Activated naive CD4-positive, alpha-beta T cell treated with anti-CD3 and anti-CD28 coated beads, Interleukin-2, amount 10 ng/mL, durations not matched to agents 7 days and 5 days (primary cell): ENCODE measurements at regions of chr6 and their contacts with region 1.

Region 1: DNA sequence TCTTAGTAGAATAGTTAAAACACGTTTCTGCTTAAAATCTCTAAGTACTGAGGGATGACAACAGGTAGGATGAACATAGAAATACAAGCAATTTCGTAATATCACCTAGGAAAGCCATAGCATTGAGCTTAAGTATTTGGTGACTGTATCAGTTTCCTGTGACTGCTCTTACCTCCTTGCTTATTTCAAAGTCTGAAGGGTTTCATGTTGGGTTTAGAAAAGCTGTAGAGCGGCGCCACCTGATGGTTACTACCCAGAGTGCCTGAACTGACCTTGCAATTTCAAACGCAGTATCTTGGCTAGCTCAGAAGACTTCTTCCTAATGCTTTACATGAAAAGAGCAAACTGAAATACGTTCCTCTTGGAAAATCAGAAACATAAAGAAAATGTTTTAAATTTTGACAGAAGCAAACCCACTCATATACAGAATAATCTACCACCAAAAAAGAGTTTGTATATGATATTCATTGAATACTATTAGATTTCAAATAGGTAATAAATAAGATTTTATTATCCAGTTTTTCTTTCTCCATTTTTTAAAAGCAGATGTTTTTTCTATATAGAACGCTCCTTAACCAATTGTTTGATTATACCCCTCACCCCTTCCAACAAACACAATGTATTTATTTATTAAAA is 82.3 kb upstream of the RIPOR2 start:
- DNase-seq: peak; percentile 90
- H3K4me3 Mint-ChIP-seq: peak overlapping the region; percentile 17
- H3K27ac Mint-ChIP-seq: peak overlapping the region; percentile 33
- H3K4me1 Mint-ChIP-seq: peaks cover 52% of the 10 kb centered on the region
- H3K27me3 Mint-ChIP-seq: no peaks in the 10 kb centered on the region

Region 2: DNA sequence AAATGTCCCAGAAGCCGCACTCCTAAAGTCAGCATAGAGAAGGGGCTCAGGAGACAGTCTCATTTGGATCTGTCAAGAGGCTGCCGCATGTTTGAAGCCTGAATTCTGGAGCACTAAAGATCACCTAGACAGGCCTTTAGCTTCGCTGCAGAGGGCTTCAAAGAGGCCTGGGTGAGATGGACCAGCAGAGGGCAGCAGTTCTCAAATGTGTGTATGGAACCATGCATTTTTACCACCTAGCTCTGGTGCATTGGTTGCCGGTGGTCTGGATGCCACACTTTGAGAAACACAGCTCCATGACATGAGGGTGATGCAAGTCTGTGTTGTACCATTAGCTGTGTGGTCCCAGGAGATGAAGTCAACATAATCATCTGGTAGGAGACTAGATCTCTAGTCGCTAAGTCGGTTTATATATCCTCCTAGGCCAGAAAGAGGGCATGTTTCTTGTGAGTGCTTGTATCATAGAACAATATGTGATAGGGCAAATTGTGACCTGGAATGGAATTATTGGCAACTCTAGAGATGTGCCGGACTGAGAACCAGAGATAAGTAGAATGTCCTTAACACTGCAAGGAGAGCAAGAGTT is 436.9 kb before region 1 on chr6:
- CTCF ChIA-PET with region 1: interaction called, 30 read pairs
- DNase-seq: peak; percentile 87
- H3K4me3 Mint-ChIP-seq: no peak overlapping the region
- H3K27ac Mint-ChIP-seq: no peak overlapping the region
- H3K4me1 Mint-ChIP-seq: peaks cover 2% of the 10 kb centered on the region
- H3K27me3 Mint-ChIP-seq: peaks cover 15% of the 10 kb centered on the region

Region 3: DNA sequence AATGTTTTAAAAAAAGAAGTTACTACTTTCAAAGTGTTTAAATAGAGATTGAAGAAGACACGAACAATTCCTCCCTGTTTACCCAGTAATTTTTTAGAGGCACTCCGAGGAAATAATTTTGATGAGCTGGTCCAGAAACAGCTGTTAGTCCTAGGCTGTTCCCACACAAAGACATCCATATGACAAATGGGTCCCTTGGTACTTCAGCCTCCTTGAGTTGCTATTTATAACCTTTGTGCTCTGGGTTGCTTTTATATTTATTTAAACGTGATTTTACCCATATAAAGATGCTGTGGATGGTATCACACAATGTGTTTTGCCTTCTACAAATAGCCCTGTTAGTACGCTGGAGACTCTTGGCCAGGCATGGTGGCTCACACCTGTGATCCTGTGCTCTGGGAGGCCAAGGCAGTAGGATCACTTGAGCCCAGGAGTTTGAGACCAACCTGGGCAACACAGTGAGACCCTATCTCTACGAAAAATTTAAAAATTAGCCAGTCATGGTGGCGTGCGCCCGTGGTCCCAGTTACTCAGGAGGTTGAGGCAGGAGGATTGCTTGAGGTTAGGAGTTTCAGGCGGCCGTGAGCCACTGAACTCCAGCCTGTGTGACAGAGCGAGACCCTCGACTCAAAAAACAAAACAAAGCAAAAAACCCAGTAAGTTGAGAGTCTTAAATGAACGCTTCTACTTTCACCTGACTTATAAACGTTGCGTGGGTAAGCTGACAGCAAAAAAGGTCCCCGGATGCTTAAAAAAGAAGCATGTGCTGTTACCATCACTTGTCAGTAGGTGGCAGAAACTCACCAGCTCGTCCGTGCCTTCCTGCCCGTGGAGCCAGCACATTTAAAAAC is 162.4 kb before region 1 on chr6:
- CTCF ChIA-PET with region 1: interaction called, 139 read pairs
- DNase-seq: peak; percentile 75
- H3K4me3 Mint-ChIP-seq: no peak overlapping the region
- H3K27ac Mint-ChIP-seq: peak overlapping the region; percentile 97
- H3K4me1 Mint-ChIP-seq: peaks cover 52% of the 10 kb centered on the region
- H3K27me3 Mint-ChIP-seq: no peaks in the 10 kb centered on the region

Region 4: GRCh38 chr6:25006565-25007001 is 11.5 kb before region 1 on chr6:
- CTCF ChIA-PET with region 1: interaction called, 11 read pairs
- DNase-seq: peak; percentile 77
- H3K4me3 Mint-ChIP-seq: peak overlapping the region; percentile 41
- H3K27ac Mint-ChIP-seq: peak overlapping the region; percentile 89
- H3K4me1 Mint-ChIP-seq: peaks cover 95% of the 10 kb centered on the region
- H3K27me3 Mint-ChIP-seq: no peaks in the 10 kb centered on the region

Region 5: GRCh38 chr6:25035527-25036435 is 17.7 kb after region 1 on chr6:
- CTCF ChIA-PET with region 1: interaction called, 13 read pairs
- DNase-seq: peak; percentile 31
- H3K4me3 Mint-ChIP-seq: peak overlapping the region; percentile 77
- H3K27ac Mint-ChIP-seq: peak overlapping the region; percentile 87
- H3K4me1 Mint-ChIP-seq: peaks cover 75% of the 10 kb centered on the region
- H3K27me3 Mint-ChIP-seq: no peaks in the 10 kb centered on the region

Region 6: DNA sequence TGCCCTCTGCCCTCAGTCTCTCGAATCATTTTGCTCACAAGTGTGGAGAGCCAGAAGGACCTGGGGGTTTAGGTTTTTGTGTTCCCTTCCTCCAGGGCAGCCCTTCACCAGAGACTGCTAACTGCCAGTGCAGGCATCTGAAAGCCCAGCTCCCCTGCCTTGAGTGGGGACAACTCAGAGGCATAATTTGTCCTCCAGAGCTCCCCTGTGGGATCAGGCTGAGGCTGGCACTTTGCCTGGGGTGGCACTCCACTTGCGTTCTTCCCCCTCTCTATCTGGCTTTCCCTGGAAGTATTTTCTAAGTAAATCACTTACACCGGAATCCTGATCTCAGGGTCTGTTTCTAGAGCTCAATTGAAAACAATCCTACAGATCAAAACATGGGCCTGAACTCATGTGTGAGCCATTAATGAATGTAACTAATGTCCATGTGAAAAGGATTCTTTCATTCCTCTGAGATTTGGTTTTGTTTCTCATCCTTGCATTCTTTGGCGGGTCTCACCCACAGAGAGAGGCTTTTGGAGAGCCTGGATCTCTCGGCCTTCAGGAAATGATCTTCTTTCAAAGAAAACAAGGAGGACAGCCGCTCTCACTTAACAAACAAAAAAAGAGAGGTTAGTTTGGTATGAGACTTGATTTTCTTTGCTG is 43.4 kb after region 1 on chr6:
- CTCF ChIA-PET with region 1: interaction called, 11 read pairs
- DNase-seq: no peak
- H3K4me3 Mint-ChIP-seq: no peak overlapping the region
- H3K27ac Mint-ChIP-seq: no peak overlapping the region
- H3K4me1 Mint-ChIP-seq: peaks cover 30% of the 10 kb centered on the region
- H3K27me3 Mint-ChIP-seq: no peaks in the 10 kb centered on the region

Region 7: DNA sequence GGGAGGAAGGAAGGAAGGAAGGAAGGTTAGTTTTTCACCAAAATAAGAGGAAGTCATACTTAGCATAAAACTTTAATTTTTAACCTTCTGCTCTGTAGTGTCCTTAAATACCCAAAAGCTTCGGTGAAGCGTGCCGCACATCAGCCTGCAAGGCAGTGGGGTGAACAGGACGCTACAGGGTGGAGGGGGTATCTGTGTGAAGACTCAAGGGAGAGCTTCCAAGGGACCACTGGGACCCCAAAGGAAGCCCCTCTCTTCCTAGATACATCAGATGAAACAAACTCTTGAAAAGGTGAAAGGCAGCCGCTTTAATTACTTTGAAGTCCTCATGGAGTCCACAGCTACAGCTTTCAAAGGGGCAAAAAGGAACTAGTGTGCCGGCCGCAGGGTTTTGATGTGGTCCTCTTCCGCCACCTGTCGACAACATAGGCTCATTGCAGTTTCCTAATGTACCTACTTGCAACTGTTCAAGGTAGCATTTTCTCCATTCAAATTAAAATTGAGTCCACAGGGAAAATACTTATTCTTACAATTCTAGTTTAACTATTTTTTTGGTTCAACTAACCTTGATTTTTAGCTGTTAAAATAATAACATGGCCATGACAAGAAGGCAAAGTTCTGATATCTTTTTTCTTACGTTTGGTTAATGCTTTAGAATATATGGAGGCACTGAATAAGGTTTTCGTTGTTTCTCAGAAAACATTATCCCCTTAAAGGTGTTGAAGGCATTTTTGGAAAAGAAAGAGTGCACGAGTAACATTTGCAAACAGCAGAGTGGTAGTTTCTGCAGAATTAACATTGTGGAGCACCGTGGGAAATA is 52.7 kb after region 1 on chr6:
- CTCF ChIA-PET with region 1: interaction called, 37 read pairs
- DNase-seq: peak; percentile 86
- H3K4me3 Mint-ChIP-seq: peak overlapping the region; percentile 21
- H3K27ac Mint-ChIP-seq: peak overlapping the region; percentile 91
- H3K4me1 Mint-ChIP-seq: peaks cover 11% of the 10 kb centered on the region
- H3K27me3 Mint-ChIP-seq: peaks cover 7% of the 10 kb centered on the region